ENCODE measurements at regions of chr2 and their contacts with region 1.

Region 1: GRCh38 chr2:64653349-64654062 is at the start of gene SERTAD2:
- DNase-seq: peak; percentile 73 to 96 (median 86)
- ATAC-seq: peak; percentile 87
- H3K4me3 ChIP-seq: peak within 1 kb of the TSS; percentile 91
- H3K4me3 Mint-ChIP-seq: peak within 1 kb of the TSS; percentile 94
- H3K27ac ChIP-seq: peak within 1 kb of the TSS; percentile 82 to 94
- H3K27ac Mint-ChIP-seq: peak within 1 kb of the TSS; percentile 91
- H3K4me1 ChIP-seq: peaks cover 38% of the 10 kb centered on the region
- H3K4me1 Mint-ChIP-seq: peaks cover 84% of the 10 kb centered on the region
- H3K27me3 ChIP-seq: no peaks in the 10 kb centered on the region
- H3K27me3 Mint-ChIP-seq: no peaks in the 10 kb centered on the region
- CTCF ChIP-seq: peak; percentile 27
- total RNA-seq, gene SERTAD2: 50.5 to 54.1 TPM

Region 2: DNA sequence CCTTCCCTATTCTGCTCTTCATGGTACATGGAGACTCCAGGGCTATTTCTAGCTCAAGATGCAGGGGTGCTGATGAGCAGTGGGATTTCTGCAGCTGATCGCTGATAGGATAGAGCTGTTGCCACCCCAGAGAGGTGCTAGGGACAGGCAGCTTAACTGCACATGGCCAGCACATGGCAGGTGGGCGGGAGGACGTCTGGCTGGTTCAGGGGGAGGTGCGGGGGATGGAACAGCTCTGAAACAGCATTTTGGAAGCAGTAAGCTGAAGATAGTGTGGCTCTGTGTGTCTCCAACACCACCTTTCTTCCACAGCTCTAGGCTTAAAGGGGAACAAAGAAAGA is 357.4 kb before region 1 on chr2:
- CTCF ChIA-PET with region 1: no interaction called
- POLR2A ChIA-PET with region 1: no interaction called
- intact Hi-C with region 1: no loop called
- DNase-seq: no peak
- ATAC-seq: no peak
- H3K4me3 ChIP-seq: no peak overlapping the region
- H3K4me3 Mint-ChIP-seq: no peak overlapping the region
- H3K27ac ChIP-seq: no peak overlapping the region
- H3K27ac Mint-ChIP-seq: no peak overlapping the region
- H3K4me1 ChIP-seq: no peaks in the 10 kb centered on the region
- H3K4me1 Mint-ChIP-seq: no peaks in the 10 kb centered on the region
- H3K27me3 ChIP-seq: no peaks in the 10 kb centered on the region
- H3K27me3 Mint-ChIP-seq: no peaks in the 10 kb centered on the region
- CTCF ChIP-seq: no peak

Region 3: GRCh38 chr2:64609227-64609941 is 44.1 kb before region 1 on chr2:
- CTCF ChIA-PET with region 1: interaction called, 7 read pairs
- POLR2A ChIA-PET with region 1: interaction called, 61 read pairs
- intact Hi-C with region 1: loop called in 1 of 2 experiments (anchors 5 kb)
- DNase-seq: peak; percentile 38 to 89 (median 64)
- ATAC-seq: peak; percentile 64
- H3K4me3 ChIP-seq: peak overlapping the region; percentile 66
- H3K4me3 Mint-ChIP-seq: peak overlapping the region; percentile 89
- H3K27ac ChIP-seq: no peak overlapping the region
- H3K27ac Mint-ChIP-seq: peak overlapping the region; percentile 72
- H3K4me1 ChIP-seq: peaks cover 41% of the 10 kb centered on the region
- H3K4me1 Mint-ChIP-seq: peaks cover 26% of the 10 kb centered on the region
- H3K27me3 ChIP-seq: no peaks in the 10 kb centered on the region
- H3K27me3 Mint-ChIP-seq: no peaks in the 10 kb centered on the region
- CTCF ChIP-seq: no peak

Region 4: DNA sequence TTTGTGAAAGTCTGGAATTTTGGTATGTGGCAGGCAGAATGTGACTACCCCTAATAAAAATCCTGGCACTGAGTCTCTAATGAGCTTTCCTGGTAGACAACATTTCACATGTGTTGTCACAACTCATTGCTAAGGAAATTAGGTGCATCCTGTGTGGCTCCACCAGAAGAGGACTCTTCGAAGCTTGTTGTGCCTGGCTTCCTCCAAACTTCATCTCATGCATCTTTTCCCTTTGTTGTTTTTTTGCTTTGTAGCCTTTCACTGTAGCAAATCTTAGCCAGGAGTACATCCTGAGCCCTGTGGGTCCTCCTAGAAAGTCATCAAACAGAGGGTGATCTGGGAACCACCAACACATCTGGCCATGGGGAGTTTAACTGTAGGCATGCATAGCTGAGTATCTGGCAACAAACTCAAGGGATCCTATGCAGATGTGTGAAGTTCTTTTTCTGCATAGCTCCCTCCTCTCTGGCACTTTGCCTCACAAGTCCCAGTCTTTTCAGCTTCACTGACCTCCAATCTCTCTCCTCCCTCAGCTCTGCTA is 42.3 kb after region 1 on chr2:
- CTCF ChIA-PET with region 1: interaction called, 3 read pairs
- POLR2A ChIA-PET with region 1: interaction called, 17 read pairs
- intact Hi-C with region 1: no loop called
- DNase-seq: no peak
- ATAC-seq: no peak
- H3K4me3 ChIP-seq: no peak overlapping the region
- H3K4me3 Mint-ChIP-seq: no peak overlapping the region
- H3K27ac ChIP-seq: no peak overlapping the region
- H3K27ac Mint-ChIP-seq: no peak overlapping the region
- H3K4me1 ChIP-seq: peaks cover 16% of the 10 kb centered on the region
- H3K4me1 Mint-ChIP-seq: peaks cover 46% of the 10 kb centered on the region
- H3K27me3 ChIP-seq: no peaks in the 10 kb centered on the region
- H3K27me3 Mint-ChIP-seq: no peaks in the 10 kb centered on the region
- CTCF ChIP-seq: no peak

Region 5: DNA sequence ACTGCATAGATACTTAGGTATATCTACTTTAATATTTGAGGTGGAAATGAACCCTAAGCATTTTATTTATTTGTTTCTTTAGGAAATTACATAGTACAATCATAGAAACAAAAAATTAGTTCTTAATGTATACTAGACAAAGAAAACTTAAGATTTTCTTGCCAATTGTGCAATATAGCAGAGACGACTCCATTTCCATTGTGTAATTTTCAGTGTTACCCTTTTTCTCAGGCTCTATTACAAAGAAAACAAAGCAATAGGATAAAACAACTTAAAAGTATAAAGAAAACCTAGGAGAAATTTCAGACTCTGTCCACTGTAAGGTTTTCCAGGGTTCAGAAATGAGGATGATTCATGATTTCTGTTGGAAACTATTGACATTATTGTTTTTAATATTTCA is 89.2 kb after region 1 on chr2:
- CTCF ChIA-PET with region 1: interaction called, 6 read pairs
- POLR2A ChIA-PET with region 1: interaction called, 395 read pairs
- intact Hi-C with region 1: loop called in 1 of 2 experiments (anchors 5 kb)
- DNase-seq: no peak
- ATAC-seq: no peak
- H3K4me3 ChIP-seq: no peak overlapping the region
- H3K4me3 Mint-ChIP-seq: no peak overlapping the region
- H3K27ac ChIP-seq: no peak overlapping the region
- H3K27ac Mint-ChIP-seq: no peak overlapping the region
- H3K4me1 ChIP-seq: no peaks in the 10 kb centered on the region
- H3K4me1 Mint-ChIP-seq: peaks cover 17% of the 10 kb centered on the region
- H3K27me3 ChIP-seq: no peaks in the 10 kb centered on the region
- H3K27me3 Mint-ChIP-seq: no peaks in the 10 kb centered on the region
- CTCF ChIP-seq: no peak

Region 6: DNA sequence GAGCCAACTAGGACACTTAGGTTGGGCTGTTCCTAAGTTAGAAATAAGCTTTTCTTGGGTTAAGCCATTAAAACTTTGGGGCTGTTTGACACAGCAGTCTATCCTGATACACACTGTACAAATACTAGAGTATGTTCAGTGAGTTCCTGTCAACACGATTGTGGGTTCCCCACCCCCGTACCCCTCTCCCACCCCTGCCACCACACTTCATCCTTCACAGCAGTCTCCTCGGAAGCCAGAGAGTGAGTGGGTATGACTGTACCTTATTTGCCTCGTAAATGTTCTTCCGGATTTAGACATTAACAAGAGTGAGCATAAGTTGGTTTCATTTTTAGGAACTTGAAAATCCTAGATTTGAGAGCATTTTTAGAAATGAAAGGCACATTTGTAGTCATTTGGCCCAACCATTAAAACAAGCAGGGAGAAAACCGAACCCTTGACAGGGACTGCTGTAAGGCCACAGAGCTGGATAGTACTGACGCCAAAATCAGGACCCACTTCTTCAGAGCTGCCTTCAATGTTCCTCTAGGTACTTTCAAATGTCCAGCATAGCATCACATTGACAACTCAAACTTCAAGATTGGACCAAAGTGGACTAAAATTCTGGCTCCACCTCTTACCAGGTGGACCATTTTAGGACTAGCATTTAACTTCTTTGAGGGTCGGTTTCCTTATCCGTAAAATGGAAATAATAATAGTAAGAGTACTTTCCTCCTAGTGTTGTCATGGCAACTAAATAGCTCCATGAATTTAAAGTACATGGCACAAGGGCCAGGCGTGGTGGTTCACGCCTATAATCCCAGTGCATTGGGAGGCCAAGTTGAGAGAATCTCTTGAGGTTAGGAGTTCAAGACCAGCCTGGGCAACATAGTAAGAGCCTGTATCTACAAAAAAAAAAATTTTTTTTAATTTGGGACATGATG is 166.5 kb after region 1 on chr2:
- CTCF ChIA-PET with region 1: interaction called, 4 read pairs
- POLR2A ChIA-PET with region 1: interaction called, 33 read pairs
- intact Hi-C with region 1: no loop called
- DNase-seq: peak; percentile 6 to 84 (median 53)
- ATAC-seq: peak; percentile 97
- H3K4me3 ChIP-seq: peak overlapping the region; percentile 27
- H3K4me3 Mint-ChIP-seq: peak overlapping the region; percentile 63
- H3K27ac ChIP-seq: peak overlapping the region; percentile 53 to 76
- H3K27ac Mint-ChIP-seq: peak overlapping the region; percentile 86
- H3K4me1 ChIP-seq: peaks cover 19% of the 10 kb centered on the region
- H3K4me1 Mint-ChIP-seq: peaks cover 34% of the 10 kb centered on the region
- H3K27me3 ChIP-seq: no peaks in the 10 kb centered on the region
- H3K27me3 Mint-ChIP-seq: no peaks in the 10 kb centered on the region
- CTCF ChIP-seq: no peak

Region 7: DNA sequence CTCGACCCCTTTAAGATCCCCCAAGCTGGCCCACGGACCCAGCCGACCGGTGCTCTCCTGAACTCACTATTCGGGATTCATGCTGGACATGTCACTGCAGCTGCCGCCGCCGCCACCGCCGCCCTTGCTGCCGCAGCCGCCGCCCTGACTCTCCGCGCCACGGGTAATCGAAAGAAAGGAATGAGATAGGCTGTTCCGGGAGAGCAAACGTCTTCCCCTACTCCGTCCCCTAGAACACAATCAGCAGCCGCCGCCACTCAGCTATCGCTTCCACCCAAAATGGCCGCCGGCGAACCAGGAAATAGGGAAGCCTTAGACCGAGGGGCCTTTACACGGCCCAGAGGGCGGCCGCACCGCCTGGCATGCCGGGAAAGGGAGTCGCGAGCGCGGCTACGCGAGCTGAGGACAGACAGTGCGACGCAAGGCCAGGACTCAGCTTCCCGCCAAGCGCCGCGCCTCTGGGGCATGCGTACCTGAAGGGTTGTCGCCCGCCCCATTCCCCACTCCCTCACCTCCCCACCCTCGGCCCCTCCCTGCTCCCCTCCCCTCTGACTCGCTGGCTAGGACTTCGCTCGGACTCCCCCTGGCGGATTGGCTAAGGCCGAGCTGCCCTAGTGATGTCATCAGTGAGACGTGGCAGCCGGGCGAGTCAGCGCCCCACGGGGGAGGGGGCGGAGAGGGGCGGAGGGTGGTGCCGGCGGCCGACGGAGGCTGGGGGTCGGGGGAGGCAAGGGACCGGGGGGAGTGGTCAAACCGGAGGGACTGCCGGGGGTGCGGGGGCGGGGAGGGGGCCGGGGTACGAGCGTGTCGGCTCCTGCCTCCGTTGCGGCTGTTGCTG is 476.5 kb after region 1 on chr2 and contains the start of gene RAB1A:
- CTCF ChIA-PET with region 1: no interaction called
- POLR2A ChIA-PET with region 1: interaction called, 15 read pairs
- intact Hi-C with region 1: no loop called
- DNase-seq: peak; percentile 98 to 100 (median 99)
- ATAC-seq: peak; percentile 89
- H3K4me3 ChIP-seq: peak within 1 kb of the TSS; percentile 80
- H3K4me3 Mint-ChIP-seq: peak within 1 kb of the TSS; percentile 100
- H3K27ac ChIP-seq: peak within 1 kb of the TSS; percentile 95
- H3K27ac Mint-ChIP-seq: peak within 1 kb of the TSS; percentile 98
- H3K4me1 ChIP-seq: peaks cover 30% of the 10 kb centered on the region
- H3K4me1 Mint-ChIP-seq: peaks cover 45% of the 10 kb centered on the region
- H3K27me3 ChIP-seq: no peaks in the 10 kb centered on the region
- H3K27me3 Mint-ChIP-seq: no peaks in the 10 kb centered on the region
- CTCF ChIP-seq: peak; percentile 37
- total RNA-seq, gene RAB1A: 85.3 to 87.6 TPM

Region 8: DNA sequence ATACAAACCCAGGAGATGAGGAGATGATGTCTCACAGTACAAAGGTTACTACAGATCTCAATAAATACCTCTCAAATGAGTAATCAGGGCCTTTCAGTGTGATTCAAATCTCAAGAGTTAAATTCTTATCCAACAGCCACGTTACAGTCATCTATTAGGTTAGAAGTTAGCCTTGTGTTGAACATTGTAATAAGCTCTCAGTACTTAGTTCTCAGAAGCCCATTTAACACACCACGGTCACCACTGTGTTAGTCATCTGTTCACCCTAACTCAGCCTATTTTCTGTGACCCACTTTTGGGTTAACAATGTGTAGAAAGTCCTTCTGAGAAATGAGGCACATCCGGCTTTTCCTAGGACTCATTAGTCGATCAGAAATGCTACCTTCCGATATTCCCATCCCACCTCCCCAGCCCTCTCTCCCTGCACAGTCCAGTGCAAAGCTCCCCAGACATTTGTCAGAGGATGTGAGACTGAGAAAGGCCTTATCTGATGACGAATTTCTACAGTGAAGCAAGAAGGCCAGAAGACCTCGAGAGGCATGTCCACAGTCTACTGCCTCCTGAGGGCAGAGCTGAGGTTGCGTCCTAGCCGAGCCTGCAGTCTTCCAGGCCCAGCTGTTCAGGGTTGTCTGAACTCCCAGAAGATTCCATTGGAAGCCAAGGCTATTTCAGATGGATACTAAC is 666.7 kb after region 1 on chr2:
- CTCF ChIA-PET with region 1: no interaction called
- POLR2A ChIA-PET with region 1: no interaction called
- intact Hi-C with region 1: no loop called
- DNase-seq: peak in 2 of 14 experiments; percentile 6 to 27
- ATAC-seq: peak; percentile 44
- H3K4me3 ChIP-seq: no peak overlapping the region
- H3K4me3 Mint-ChIP-seq: no peak overlapping the region
- H3K27ac ChIP-seq: no peak overlapping the region
- H3K27ac Mint-ChIP-seq: no peak overlapping the region
- H3K4me1 ChIP-seq: peaks cover 6% of the 10 kb centered on the region
- H3K4me1 Mint-ChIP-seq: peaks cover 5% of the 10 kb centered on the region
- H3K27me3 ChIP-seq: no peaks in the 10 kb centered on the region
- H3K27me3 Mint-ChIP-seq: no peaks in the 10 kb centered on the region
- CTCF ChIP-seq: no peak

Measured in CD4-positive, alpha-beta T cell (primary cell).